A673 (cell line): ENCODE measurements at regions of chr12 and their contacts with region 1.

Region 1: DNA sequence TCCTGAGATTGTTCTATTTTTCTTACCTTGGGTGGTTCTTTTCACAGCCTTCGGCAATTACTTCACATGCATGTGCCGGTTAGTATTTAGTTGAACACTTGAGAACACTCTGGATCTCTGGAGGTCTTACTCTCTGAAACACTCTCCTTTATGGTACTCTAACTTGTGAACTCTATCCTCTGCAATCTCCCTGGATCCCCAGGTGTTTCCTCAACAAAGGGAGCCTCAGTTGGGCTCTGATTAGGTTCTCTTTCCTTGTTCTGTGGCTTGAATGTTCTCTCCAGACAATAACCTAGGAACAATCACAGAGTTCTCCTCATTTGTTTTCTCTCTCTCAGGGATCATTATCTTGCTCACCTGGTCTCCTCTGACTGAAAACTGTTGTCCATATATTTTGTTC is 40.5 kb upstream of the ABCD2 start:
- DNase-seq: no peak
- H3K4me3 ChIP-seq: no peak overlapping the region
- H3K27ac ChIP-seq: no peak overlapping the region
- H3K4me1 ChIP-seq: no peaks in the 10 kb centered on the region
- H3K27me3 ChIP-seq: no peaks in the 10 kb centered on the region
- CTCF ChIP-seq: no peak

Region 2: GRCh38 chr12:39712334-39712733 is 52.2 kb after region 1 on chr12:
- CTCF ChIA-PET with region 1: no interaction called
- POLR2A ChIA-PET with region 1: no interaction called
- intact Hi-C with region 1: loop called (anchors 5 kb)
- DNase-seq: no peak
- H3K4me3 ChIP-seq: no peak overlapping the region
- H3K27ac ChIP-seq: no peak overlapping the region
- H3K4me1 ChIP-seq: no peaks in the 10 kb centered on the region
- H3K27me3 ChIP-seq: no peaks in the 10 kb centered on the region
- CTCF ChIP-seq: no peak